ENCODE measurements at regions of chr9 and their contacts with region 1.

Region 1: GRCh38 chr9:136118320-136119060 is at the start of gene TMEM250:
- H3K4me3 ChIP-seq: peak within 1 kb of the TSS; percentile 55
- H3K27ac ChIP-seq: peak within 1 kb of the TSS; percentile 97
- H3K4me1 ChIP-seq: 0 out of 2 replicates have a peak, but pooled peaks cover 2% of the 10 kb centered on the region
- CTCF ChIP-seq: peak; percentile 65

Region 2: DNA sequence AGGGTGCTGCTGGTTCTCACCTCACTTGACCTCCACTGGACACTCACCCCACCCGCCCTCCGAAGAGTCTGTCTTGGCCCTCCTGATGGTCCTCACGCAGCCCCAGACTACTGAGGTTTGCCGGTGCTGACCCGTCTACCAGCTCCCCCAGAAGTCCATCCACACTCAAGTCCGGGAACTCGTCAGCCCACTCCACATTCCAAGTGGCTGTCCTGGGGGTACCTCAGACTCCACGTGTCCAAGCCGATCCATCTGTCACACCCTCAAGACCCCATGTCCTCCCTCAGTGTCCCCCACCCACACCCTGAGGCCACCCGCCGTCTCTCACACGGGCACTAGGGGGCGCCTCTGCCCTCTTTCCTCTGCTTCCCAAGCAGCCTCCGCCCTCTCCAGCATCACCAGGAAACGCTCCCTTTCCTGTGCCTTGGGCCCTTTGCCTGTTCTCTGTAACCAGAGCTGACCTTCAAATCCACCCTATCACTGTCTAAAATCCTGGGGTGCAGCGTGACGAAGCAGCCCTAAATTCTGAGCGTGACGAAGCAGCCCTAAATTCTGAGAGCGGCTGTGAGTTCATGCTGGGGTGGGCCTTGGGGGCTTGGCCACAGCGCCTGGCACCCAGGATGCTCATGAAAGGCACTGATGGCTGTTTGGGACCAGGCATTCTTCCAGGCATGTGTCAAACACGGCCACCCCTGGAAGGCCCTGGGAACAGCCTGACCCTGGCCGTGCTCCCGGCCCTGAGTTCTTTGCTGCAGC is 320.8 kb before region 1 on chr9:
- CTCF ChIA-PET with region 1: interaction called, 17 read pairs
- POLR2A ChIA-PET with region 1: no interaction called
- H3K4me3 ChIP-seq: no peak overlapping the region
- H3K27ac ChIP-seq: no peak overlapping the region
- H3K4me1 ChIP-seq: no peaks in the 10 kb centered on the region
- CTCF ChIP-seq: peak; percentile 78

Region 3: GRCh38 chr9:135961277-135961705 is 157.2 kb before region 1 on chr9 and contains the start of gene UBAC1:
- CTCF ChIA-PET with region 1: interaction called, 95 read pairs
- POLR2A ChIA-PET with region 1: interaction called, 4 read pairs
- H3K4me3 ChIP-seq: peak within 1 kb of the TSS; percentile 86
- H3K27ac ChIP-seq: peak within 1 kb of the TSS; percentile 47; the same call in 1 of the 2 replicates
- H3K4me1 ChIP-seq: no peaks in the 10 kb centered on the region
- CTCF ChIP-seq: peak; percentile 94

Region 4: GRCh38 chr9:136093995-136094881 is 24.3 kb before region 1 on chr9:
- CTCF ChIA-PET with region 1: interaction called, 67 read pairs
- POLR2A ChIA-PET with region 1: interaction called, 8 read pairs
- H3K4me3 ChIP-seq: peak overlapping the region; percentile 63
- H3K27ac ChIP-seq: peak overlapping the region; percentile 88
- H3K4me1 ChIP-seq: peaks cover 3% of the 10 kb centered on the region
- CTCF ChIP-seq: peak; percentile 30; the same call in 1 of the 2 replicates

Region 5: DNA sequence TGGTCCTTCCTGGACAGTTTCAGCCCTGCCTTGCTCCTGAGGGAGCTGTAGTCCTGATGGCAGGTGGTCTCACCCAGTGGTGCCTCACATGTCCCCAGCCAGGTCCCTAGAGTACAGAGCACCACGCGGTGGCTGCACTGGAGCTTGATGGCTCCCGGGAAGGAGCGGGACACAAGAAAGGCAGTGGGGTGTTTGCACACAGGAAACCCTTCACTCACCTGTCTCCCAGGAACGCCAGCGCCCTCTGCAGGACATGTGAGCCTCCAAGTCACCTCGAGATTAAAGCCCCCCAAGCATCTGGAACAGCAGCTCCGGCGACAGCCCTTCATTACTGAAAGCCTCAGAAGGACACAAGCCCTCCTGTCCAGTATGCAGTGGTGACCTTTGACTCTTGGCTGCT is 20.1 kb after region 1 on chr9:
- CTCF ChIA-PET with region 1: interaction called, 31 read pairs
- POLR2A ChIA-PET with region 1: no interaction called
- H3K4me3 ChIP-seq: no peak overlapping the region
- H3K27ac ChIP-seq: no peak overlapping the region
- H3K4me1 ChIP-seq: no peaks in the 10 kb centered on the region
- CTCF ChIP-seq: peak; percentile 29; the same call in 1 of the 2 replicates